ENCODE measurements at regions of chr1 and their contacts with region 1.

Region 1: DNA sequence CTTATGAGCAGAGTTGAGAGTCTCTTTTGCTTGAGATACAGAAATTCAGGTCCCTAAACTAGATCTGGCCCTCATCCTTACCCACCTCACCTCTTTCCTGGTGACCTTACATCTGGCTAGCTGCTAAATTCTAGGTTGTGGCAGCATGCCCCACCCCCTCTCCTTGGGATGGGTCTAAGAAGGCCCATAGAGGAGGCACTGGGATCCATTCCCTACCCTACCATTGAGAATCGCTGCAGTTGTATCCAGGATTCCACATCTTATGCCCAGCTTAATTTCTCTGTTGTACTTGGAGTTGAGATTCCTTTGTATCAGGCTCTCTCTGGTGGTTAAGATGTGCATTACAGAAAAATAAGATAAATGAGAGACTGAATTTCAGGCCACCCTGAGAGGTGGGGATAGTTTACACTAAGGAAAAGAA is 9.5 kb upstream of the TMEM39B start:
- DNase-seq: no peak
- H3K4me3 ChIP-seq: no peak overlapping the region
- H3K27ac ChIP-seq: peak overlapping the region; percentile 74 to 78
- H3K4me1 ChIP-seq: peaks cover 0 to 39% (median 30%) of the 10 kb centered on the region in 4 donors
- H3K27me3 ChIP-seq: no peaks in the 10 kb centered on the region
- CTCF ChIP-seq: peak; percentile 66 to 84

Region 2: GRCh38 chr1:32014948-32015273 is 48.4 kb before region 1 on chr1:
- intact Hi-C with region 1: loop called (anchors 5 kb)
- DNase-seq: no peak
- H3K4me3 ChIP-seq: peak overlapping the region; percentile 86 to 99
- H3K27ac ChIP-seq: peak overlapping the region; percentile 98 to 99
- H3K4me1 ChIP-seq: peaks cover 0 to 54% (median 39%) of the 10 kb centered on the region in 4 donors
- H3K27me3 ChIP-seq: no peaks in the 10 kb centered on the region
- CTCF ChIP-seq: no peak

Region 3: GRCh38 chr1:32045772-32046171 is 17.5 kb before region 1 on chr1:
- intact Hi-C with region 1: no loop called
- DNase-seq: no peak
- H3K4me3 ChIP-seq: no peak overlapping the region
- H3K27ac ChIP-seq: no peak overlapping the region
- H3K4me1 ChIP-seq: no peaks in the 10 kb centered on the region
- H3K27me3 ChIP-seq: no peaks in the 10 kb centered on the region
- CTCF ChIP-seq: no peak

Region 4: DNA sequence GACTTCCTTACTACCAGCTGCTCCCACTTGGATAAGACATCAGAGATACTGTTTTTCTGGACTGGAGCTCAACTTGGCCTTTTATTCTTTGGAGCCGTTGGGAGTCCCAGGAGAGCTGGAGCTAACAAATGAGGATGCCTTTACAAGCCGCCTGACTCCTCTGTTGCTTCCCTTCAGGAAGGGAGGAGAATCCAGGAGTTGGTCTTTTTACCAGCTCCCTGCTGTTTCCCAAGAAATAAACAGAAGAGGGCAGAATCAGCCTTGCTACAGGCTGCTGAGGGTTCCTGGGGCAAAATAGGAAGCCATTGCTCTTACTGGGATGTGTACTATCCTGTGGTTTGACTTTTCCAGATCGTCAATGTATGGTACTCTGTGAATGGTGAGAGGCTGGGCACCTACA is 160.4 kb after region 1 on chr1:
- intact Hi-C with region 1: no loop called
- DNase-seq: no peak
- H3K4me3 ChIP-seq: peak overlapping the region; percentile 65 to 86
- H3K27ac ChIP-seq: peak overlapping the region in 1 of 2 donors; percentile 92
- H3K4me1 ChIP-seq: peaks cover 0 to 34% (median 28%) of the 10 kb centered on the region in 4 donors
- H3K27me3 ChIP-seq: no peaks in the 10 kb centered on the region
- CTCF ChIP-seq: no peak

Measured in tibial artery (tissue), 4 donors.